ENCODE measurements at regions of chr6 and their contacts with region 1.

Region 1: DNA sequence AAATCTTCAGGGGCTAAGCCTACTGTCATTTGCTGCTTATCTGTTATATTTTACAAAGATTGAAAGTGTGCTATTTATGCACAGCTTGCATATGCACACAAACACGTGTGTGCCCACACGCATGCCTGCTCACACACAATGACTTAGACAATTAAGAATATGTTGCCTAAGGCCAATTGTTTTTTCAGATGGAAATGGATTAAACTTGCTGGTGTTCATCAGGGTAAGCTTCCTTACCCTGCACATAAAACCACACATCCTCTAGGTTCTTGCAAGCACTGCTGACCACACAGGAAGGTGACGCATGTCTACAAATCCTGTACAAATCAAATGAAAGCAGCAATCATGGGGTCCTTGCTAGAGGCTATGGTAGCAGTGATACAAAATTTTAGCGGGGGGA is 58.4 kb downstream of the GJA10 start:
- DNase-seq: peak; percentile 22 to 90 (median 48)
- ATAC-seq: peak; percentile 94
- H3K4me3 ChIP-seq: no peak overlapping the region
- H3K4me3 Mint-ChIP-seq: peak overlapping the region; percentile 67
- H3K27ac ChIP-seq: peak overlapping the region; percentile 48 to 49
- H3K27ac Mint-ChIP-seq: peak overlapping the region; percentile 92
- H3K4me1 ChIP-seq: peaks cover 55% of the 10 kb centered on the region
- H3K4me1 Mint-ChIP-seq: peaks cover 74% of the 10 kb centered on the region
- H3K27me3 ChIP-seq: no peaks in the 10 kb centered on the region
- H3K27me3 Mint-ChIP-seq: no peaks in the 10 kb centered on the region
- CTCF ChIP-seq: no peak

Region 2: DNA sequence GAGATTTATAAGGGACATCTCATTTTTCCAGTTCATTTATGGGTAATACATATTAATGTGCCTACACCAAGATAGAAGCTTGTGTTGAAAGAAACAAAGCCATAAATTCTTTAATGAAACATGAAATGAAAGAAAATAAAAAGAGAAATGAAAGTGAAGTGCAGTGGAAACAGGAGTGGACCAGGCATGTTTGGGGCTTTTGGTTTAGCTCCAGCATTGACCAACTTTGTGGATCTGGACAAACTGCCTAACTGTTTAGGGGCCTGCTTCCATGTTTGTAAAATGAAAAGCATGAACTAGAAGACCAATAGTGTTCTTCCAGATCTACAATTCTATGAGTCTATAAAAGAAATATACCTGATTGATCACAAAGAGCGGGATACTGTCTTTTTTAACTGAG is 66.5 kb after region 1 on chr6:
- CTCF ChIA-PET with region 1: no interaction called
- POLR2A ChIA-PET with region 1: no interaction called
- intact Hi-C with region 1: loop called in 1 of 2 experiments (anchors 10 kb)
- DNase-seq: no peak
- ATAC-seq: no peak
- H3K4me3 ChIP-seq: no peak overlapping the region
- H3K4me3 Mint-ChIP-seq: no peak overlapping the region
- H3K27ac ChIP-seq: no peak overlapping the region
- H3K27ac Mint-ChIP-seq: peak overlapping the region; percentile 35
- H3K4me1 ChIP-seq: no peaks in the 10 kb centered on the region
- H3K4me1 Mint-ChIP-seq: peaks cover 62% of the 10 kb centered on the region
- H3K27me3 ChIP-seq: no peaks in the 10 kb centered on the region
- H3K27me3 Mint-ChIP-seq: no peaks in the 10 kb centered on the region
- CTCF ChIP-seq: no peak

Region 3: GRCh38 chr6:90285611-90286381 is 333.1 kb after region 1 on chr6:
- CTCF ChIA-PET with region 1: no interaction called
- POLR2A ChIA-PET with region 1: interaction called, 3 read pairs
- intact Hi-C with region 1: loop called in 1 of 2 experiments (anchors 5 kb)
- DNase-seq: peak in 11 of 14 experiments; percentile 21 to 79 (median 45)
- ATAC-seq: peak; percentile 47
- H3K4me3 ChIP-seq: peak overlapping the region; percentile 54
- H3K4me3 Mint-ChIP-seq: peak overlapping the region; percentile 83
- H3K27ac ChIP-seq: peak overlapping the region; percentile 12 to 80
- H3K27ac Mint-ChIP-seq: peak overlapping the region; percentile 91
- H3K4me1 ChIP-seq: peaks cover 38% of the 10 kb centered on the region
- H3K4me1 Mint-ChIP-seq: peaks cover 93% of the 10 kb centered on the region
- H3K27me3 ChIP-seq: no peaks in the 10 kb centered on the region
- H3K27me3 Mint-ChIP-seq: no peaks in the 10 kb centered on the region
- CTCF ChIP-seq: no peak